ENCODE measurements at regions of chr1 and their contacts with region 1.

Region 1: GRCh38 chr1:205528887-205529825 is 24.7 kb downstream of the CDK18 start:
- DNase-seq: peak; percentile 77 to 97 (median 90)

Region 2: DNA sequence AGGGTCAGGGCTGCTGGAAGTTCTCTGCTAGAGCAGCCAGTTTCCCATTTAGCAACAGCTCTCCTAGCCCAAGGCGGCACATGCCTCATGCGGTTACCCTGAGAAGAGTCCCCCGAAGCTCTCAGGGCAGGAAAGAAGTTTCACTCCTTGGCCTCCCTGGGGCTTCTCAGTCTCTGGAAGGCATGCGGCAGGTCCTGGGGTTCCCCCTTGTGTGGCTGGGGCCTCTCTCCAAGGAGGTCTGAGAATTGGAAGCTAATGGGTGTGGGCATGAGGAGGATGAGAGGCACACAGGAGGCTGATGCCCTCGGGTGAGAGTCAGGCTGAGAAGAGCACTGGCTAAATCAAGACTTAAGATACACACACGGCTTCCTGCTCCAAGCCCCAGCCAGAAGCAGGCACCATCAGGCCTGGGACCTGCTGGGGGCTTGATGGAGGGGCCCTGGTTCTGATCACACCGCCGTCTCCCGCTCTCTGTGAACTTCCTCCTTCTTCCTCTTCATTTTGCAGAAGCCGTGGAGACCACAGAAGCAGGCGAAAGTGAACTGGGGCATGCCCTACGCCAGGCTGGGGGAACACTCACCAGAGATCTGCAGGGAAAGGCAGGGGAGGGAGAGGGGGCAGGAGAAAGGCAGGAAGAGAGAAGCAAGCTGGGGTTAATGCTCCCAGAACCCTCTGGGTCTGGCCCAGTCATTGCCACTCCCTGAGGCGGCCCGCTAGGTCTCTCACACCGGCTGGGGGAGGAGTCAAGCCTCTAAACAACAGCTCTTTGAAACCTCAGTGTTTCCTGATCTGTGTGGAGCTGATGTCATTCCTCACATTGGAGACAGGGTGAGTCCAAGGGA is 88.5 kb before region 1 on chr1:
- intact Hi-C with region 1: no loop called
- DNase-seq: peak in 2 of 10 donors; percentile 66 to 92

Region 3: GRCh38 chr1:205631727-205632373 is 102.7 kb after region 1 on chr1 and contains the start of gene ELK4:
- intact Hi-C with region 1: loop called (anchors 5 kb)
- DNase-seq: peak; percentile 97 to 100 (median 99)

Region 4: DNA sequence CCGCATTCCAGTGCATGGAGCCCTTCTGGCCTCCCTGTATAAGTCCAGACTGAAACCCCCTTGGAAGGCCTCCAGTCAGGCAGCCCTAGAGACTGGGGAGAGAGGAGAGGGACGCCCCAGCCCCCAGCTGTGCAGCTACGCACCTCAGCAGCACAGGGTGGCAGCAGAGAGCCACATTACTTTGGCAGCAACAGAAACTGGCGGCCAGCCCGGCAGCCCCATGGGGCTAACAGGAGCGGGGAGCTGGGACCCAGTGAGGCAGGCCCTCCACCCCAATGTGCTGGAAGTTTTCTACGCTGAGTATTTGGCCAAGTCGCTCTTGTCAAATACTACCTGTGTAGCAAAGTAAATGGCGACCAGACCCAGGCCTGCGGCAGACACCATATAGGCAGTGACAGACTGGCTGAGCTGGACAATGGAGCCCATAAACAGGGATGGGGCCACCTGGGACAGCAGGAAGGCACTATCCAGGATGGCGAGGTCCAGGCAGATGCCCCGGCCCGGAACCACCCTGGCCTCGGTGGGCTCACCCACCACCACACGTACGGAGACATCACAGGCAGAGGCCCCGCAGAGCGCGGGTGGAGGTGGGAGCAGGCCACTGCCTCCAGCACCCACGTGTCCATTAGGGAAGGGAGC is 129.9 kb after region 1 on chr1:
- intact Hi-C with region 1: loop called (anchors 2 kb)
- DNase-seq: peak; percentile 79 to 98 (median 90)